ENCODE measurements at regions of chr6 and their contacts with region 1.

Region 1: DNA sequence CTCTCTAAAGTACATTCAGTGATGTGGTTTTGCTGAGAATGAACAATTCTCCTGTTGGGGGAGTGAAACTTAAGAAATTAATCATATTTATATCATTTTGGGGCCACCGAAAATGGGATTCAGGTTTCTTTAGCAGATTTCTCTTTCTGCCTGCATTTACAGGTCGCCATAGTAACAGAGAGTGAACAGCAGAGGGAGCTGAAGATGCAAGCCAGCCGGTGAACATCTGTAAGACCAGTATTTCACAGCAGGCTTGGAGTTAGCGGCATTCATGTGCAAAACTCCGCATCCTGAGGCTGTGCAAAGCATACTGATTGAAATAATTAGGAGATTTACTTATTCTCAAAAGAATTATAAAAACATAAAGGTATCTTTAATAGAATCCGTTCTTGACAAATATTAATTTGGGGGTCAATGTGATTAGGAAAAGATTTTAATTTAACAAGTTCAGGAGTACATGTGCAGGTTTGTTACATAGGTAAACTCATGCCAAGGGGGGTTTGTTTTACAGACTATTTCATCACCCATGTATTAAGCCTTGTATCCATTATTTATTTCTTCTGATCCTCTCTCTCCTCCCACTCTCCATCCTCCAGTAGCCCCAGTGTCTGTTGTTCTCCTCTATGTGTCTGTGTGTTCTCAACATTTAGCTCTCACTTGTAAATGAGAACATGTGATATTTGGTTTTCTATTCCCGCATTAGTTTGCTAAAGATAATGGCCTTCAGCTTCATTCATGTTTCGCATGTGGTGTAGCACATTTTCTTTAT is 17.8 kb upstream of the HSF2 start:
- DNase-seq: peak in 1 of 3 donors; percentile 72
- ATAC-seq: peak; percentile 79
- H3K4me3 ChIP-seq: no peak overlapping the region
- H3K4me1 ChIP-seq: no peaks in the 10 kb centered on the region
- CTCF ChIP-seq: peak; percentile 64

Region 2: DNA sequence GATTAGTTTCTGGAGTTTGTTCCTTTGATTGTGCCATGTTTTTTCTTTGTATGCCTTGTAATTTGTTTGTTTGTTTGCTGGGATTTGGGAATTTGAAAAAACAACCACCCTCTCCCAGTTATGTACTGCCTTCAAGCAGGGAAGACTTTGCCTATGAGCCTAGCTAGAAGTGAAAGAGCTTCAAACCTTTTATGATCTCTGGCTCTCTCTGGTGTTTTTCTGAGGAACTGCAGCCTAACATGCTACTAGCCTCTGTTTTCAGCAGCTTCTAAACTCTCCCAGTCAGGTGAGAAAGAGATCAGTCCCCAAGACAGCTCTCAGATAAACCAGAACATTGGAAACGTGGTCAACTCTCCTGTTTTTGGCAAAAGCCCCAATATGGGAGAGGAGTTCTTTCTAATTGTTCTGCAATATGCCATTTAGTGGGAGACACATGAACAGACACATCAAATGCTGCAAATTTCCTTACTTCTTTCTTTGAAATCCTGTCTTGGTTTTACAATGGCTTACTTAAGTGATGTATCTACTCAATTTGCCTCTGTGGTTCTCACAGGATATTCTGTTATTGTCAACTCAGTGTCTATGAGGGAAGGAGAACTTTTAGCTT is 148.9 kb after region 1 on chr6:
- intact Hi-C with region 1: loop called (anchors 5 to 10 kb)
- DNase-seq: peak in 1 of 3 donors; percentile 88
- ATAC-seq: peak; percentile 91
- H3K4me3 ChIP-seq: no peak overlapping the region
- H3K4me1 ChIP-seq: no peaks in the 10 kb centered on the region
- CTCF ChIP-seq: peak; percentile 76

Measured in mucosa of descending colon (tissue), 3 donors.